Activated B cell treated with CpG ODN at 0.5 μM for 24 hours (primary cell): ENCODE measurements at regions of chr9 and their contacts with region 1.

Region 1: GRCh38 chr9:5529683-5530221 is 19.4 kb downstream of the PDCD1LG2 start:
- DNase-seq: no peak
- ATAC-seq: peak; percentile 57
- H3K4me3 Mint-ChIP-seq: peak overlapping the region; percentile 60
- H3K27ac Mint-ChIP-seq: peak overlapping the region; percentile 51
- H3K4me1 Mint-ChIP-seq: peaks cover 57% of the 10 kb centered on the region
- H3K27me3 Mint-ChIP-seq: no peaks in the 10 kb centered on the region
- CTCF ChIP-seq: no peak

Region 2: DNA sequence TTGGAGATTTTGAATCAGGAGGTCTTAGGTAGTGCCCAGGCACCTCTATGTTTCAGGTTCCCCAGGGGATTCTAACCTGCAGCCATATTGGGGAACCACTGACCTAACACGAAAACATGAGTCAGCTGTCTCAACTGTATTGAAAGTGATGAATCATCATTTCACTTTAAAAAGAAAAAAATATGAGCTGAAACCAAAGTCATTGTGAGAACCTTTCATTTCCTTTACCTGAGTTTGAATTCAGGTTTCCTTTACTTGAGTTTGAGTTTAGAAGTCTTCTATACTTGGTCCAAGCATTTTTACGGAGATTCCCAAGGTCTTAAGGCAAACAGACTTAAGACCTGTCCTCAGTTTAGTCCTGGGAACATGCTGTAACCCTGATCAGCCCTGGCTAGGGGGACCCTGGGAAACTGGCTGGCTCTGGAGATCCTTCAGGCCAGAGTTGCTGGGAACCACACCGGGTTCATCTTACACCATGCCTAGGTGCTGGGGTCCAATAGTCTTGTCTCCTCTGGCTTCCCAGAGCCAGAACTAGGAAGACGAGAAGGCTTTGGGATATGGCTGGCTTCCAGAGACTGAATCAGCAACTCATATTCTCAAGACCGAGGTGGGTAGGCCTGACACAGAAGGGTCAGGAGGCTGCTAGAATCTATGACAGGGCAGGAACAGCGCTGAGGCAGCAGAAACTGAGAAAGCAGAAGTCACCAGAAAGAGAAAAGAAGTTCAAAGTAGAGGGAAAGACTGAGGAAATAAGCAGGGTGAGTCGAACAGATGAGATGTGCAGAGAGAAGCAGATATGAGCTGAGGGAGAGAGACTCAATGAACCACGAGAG is 35.9 kb before region 1 on chr9:
- CTCF ChIA-PET with region 1: no interaction called
- POLR2A ChIA-PET with region 1: interaction called, 12 read pairs
- intact Hi-C with region 1: no loop called
- DNase-seq: no peak
- ATAC-seq: peak; percentile 78
- H3K4me3 Mint-ChIP-seq: peak overlapping the region; percentile 3
- H3K27ac Mint-ChIP-seq: peak overlapping the region; percentile 54
- H3K4me1 Mint-ChIP-seq: peaks cover 17% of the 10 kb centered on the region
- H3K27me3 Mint-ChIP-seq: no peaks in the 10 kb centered on the region
- CTCF ChIP-seq: no peak

Region 3: DNA sequence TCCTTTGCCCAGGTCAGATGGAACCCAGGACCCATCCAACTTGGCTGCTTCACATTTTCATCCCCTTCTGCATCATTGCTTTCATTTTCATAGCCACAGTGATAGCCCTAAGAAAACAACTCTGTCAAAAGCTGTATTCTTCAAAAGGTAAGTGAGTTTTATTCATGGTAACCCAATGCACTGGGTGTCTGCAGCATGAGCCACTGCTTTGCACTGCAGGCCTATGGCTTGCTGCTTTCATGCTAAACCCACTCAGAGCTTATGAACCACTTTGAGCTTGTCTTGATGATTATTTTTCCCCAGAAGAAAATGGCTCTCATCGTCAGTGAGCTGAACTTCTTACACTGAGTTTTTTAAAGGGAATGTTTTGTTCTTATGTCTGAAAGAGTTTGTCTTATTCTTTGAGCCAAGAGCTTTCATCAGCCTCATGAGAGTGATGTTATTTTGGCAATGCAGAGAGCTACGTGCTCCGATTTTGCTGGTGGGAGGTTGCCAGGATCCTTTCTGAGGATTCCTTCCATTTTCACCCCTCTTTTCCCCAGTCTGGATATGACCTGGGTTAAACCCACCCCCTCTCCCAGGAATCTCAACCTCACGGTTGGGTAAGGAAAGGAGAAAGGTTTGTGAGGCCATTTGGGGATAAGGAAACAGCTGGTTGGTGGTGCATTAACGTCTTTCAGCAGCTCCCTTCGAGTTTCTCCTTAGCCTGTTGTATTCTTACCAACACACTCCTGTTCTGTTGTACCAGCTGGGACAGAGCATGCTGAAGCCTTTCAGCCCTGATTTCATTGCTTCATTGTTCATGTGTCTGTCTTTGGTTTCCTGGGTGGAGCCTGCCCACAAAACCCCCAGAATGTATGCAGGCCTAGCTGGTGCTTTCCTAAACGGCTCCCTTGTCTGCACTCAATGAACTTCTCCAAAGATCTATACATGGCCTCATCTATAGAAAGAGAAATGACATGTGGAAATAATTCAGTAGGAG is 28.1 kb after region 1 on chr9:
- CTCF ChIA-PET with region 1: no interaction called
- POLR2A ChIA-PET with region 1: interaction called, 16 read pairs
- intact Hi-C with region 1: no loop called
- DNase-seq: peak; percentile 20
- ATAC-seq: peak; percentile 83
- H3K4me3 Mint-ChIP-seq: peak overlapping the region; percentile 50
- H3K27ac Mint-ChIP-seq: peak overlapping the region; percentile 75
- H3K4me1 Mint-ChIP-seq: peaks cover 55% of the 10 kb centered on the region
- H3K27me3 Mint-ChIP-seq: no peaks in the 10 kb centered on the region
- CTCF ChIP-seq: no peak

Region 4: DNA sequence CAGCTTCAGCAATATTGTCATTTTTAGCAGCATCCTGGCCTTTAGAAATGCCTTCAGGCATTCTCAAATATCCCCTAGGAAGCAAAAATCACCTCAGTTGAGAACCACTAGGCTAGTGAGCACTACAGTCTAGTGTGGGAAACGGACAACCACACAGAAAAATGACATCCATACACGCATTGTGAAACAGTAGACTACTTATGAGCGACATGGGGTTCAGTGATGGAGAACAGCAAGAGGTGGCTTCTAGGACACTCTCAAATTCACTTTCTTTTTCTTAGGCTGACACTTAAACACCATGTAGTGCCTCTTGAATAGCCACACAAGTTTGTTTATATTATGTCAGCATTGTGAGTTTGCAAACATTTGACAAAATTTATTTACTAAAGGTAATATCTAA is 1431.0 kb after region 1 on chr9:
- CTCF ChIA-PET with region 1: no interaction called
- POLR2A ChIA-PET with region 1: no interaction called
- intact Hi-C with region 1: no loop called
- DNase-seq: no peak
- ATAC-seq: no peak
- H3K4me3 Mint-ChIP-seq: no peak overlapping the region
- H3K27ac Mint-ChIP-seq: no peak overlapping the region
- H3K4me1 Mint-ChIP-seq: peaks cover 22% of the 10 kb centered on the region
- H3K27me3 Mint-ChIP-seq: no peaks in the 10 kb centered on the region
- CTCF ChIP-seq: no peak